OCI-LY7 (cell line): ENCODE measurements at regions of chr13 and their contacts with region 1.

Region 1: GRCh38 chr13:24727731-24728601 is 36.0 kb upstream of the RNF17 start:
- DNase-seq: peak; percentile 86
- H3K4me3 ChIP-seq: no peak overlapping the region
- H3K27ac ChIP-seq: no peak overlapping the region
- H3K4me1 ChIP-seq: no peaks in the 10 kb centered on the region
- CTCF ChIP-seq: peak; percentile 87

Region 2: GRCh38 chr13:24012648-24013047 is 715.3 kb before region 1 on chr13:
- CTCF ChIA-PET with region 1: no interaction called
- POLR2A ChIA-PET with region 1: no interaction called
- intact Hi-C with region 1: loop called (anchors 10 kb)
- DNase-seq: no peak
- H3K4me3 ChIP-seq: no peak overlapping the region
- H3K27ac ChIP-seq: no peak overlapping the region
- H3K4me1 ChIP-seq: no peaks in the 10 kb centered on the region
- CTCF ChIP-seq: no peak

Region 3: DNA sequence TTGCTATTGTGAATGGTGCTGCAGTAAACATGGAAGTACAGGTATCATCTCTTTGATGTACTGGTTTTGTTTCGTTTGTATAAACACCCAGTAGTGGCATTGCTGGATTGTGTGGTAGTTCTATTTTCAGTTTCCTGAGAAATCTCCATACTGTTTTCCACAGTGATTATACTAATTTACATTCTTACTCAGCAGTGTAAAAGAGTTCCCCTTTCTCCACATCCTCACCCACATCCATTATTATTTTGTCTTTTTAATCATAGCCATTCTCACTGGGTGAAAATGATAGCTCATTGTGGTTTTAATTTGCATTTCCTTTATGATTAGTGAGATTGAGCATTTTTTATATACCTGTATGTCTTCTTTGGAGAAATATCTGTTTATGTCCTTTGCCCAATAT is 153.1 kb before region 1 on chr13:
- CTCF ChIA-PET with region 1: no interaction called
- POLR2A ChIA-PET with region 1: no interaction called
- intact Hi-C with region 1: loop called (anchors 2 kb)
- DNase-seq: no peak
- H3K4me3 ChIP-seq: no peak overlapping the region
- H3K27ac ChIP-seq: no peak overlapping the region
- H3K4me1 ChIP-seq: peaks cover 3% of the 10 kb centered on the region
- CTCF ChIP-seq: no peak

Region 4: DNA sequence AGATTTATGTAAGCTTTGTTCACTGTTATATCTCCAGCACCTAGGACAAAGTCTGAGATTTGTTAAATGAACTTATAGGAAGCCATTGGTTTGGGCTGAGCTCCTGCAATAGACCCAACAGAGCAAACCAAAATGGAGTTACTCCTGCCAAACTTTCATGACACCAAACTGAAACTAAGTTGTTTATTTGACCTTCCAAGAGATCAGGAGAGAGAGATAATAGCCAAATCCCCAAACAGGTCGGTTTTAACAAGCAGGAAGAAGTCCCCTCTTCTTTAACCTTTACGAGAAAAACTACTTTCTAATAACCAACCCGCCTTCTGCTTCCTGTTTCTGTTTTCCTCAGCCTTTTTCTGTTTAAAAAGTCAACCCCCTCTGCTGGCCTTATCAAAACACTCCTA is 102.6 kb before region 1 on chr13:
- CTCF ChIA-PET with region 1: no interaction called
- POLR2A ChIA-PET with region 1: no interaction called
- intact Hi-C with region 1: no loop called
- DNase-seq: peak; percentile 43
- H3K4me3 ChIP-seq: no peak overlapping the region
- H3K27ac ChIP-seq: peak overlapping the region; percentile 32
- H3K4me1 ChIP-seq: peaks cover 23% of the 10 kb centered on the region
- CTCF ChIP-seq: no peak

Region 5: GRCh38 chr13:24693862-24694471 is 34.0 kb before region 1 on chr13:
- CTCF ChIA-PET with region 1: interaction called, 4 read pairs
- POLR2A ChIA-PET with region 1: no interaction called
- intact Hi-C with region 1: loop called (anchors 1 kb)
- DNase-seq: peak; percentile 82
- H3K4me3 ChIP-seq: no peak overlapping the region
- H3K27ac ChIP-seq: no peak overlapping the region
- H3K4me1 ChIP-seq: no peaks in the 10 kb centered on the region
- CTCF ChIP-seq: peak; percentile 94